ENCODE measurements at regions of chr10 and their contacts with region 1.

Region 1: DNA sequence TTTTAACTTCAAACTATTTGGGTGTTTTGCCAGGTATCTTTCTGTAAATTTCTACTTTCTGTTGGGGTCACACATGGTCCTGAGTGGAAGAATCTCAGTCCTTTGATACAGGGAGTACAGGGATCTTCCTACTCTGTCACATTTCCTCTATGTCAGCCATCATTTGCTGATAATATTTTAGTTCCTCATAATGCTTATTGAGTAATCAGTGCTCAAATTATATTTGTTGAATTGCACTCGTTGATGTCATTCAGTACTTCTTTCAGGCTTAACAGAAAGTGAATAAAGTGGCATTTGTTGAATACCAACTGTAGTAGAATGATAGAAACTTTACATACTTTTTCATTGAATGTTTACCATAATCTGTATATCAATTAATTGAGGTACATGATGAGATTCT is 31.9 kb downstream of the WDR11 start:
- DNase-seq: no peak
- H3K4me3 ChIP-seq: no peak overlapping the region
- H3K27ac ChIP-seq: no peak overlapping the region
- H3K4me1 ChIP-seq: no peaks in the 10 kb centered on the region
- H3K27me3 ChIP-seq: no peaks in the 10 kb centered on the region
- CTCF ChIP-seq: no peak

Region 2: GRCh38 chr10:120841522-120842189 is 41.4 kb before region 1 on chr10:
- CTCF ChIA-PET with region 1: interaction called, 11 read pairs
- dilution Hi-C with region 1: no loop called
- in situ Hi-C with region 1: no loop called
- intact Hi-C with region 1: no loop called
- DNase-seq: peak; percentile 15
- H3K4me3 ChIP-seq: no peak overlapping the region
- H3K27ac ChIP-seq: no peak overlapping the region
- H3K4me1 ChIP-seq: peaks cover 20% of the 10 kb centered on the region
- H3K27me3 ChIP-seq: peaks cover 4% of the 10 kb centered on the region
- CTCF ChIP-seq: no peak

Region 3: GRCh38 chr10:121088524-121088923 is 205.5 kb after region 1 on chr10:
- CTCF ChIA-PET with region 1: no interaction called
- dilution Hi-C with region 1: no loop called
- in situ Hi-C with region 1: no loop called
- intact Hi-C with region 1: no loop called
- DNase-seq: peak; percentile 68
- H3K4me3 ChIP-seq: no peak overlapping the region
- H3K27ac ChIP-seq: no peak overlapping the region
- H3K4me1 ChIP-seq: peaks cover 12% of the 10 kb centered on the region
- H3K27me3 ChIP-seq: no peaks in the 10 kb centered on the region
- CTCF ChIP-seq: peak; percentile 67 to 75

Measured in mammary epithelial cell (primary cell).